Dorsolateral prefrontal cortex (tissue), 120 donors: ENCODE measurements at regions of chr2 and their contacts with region 1.

Region 1: GRCh38 chr2:234288974-234289455 is 207.9 kb downstream of the ARL4C start:
- DNase-seq: peak in 9 of 10 donors; percentile 23 to 66 (median 48)
- H3K4me3 ChIP-seq: no peak overlapping the region
- H3K27ac ChIP-seq: no peak overlapping the region
- H3K27me3 ChIP-seq: peaks cover 0 to 5% (median 0%) of the 10 kb centered on the region in 45 donors
- CTCF ChIP-seq: peak; percentile 45 to 77 (median 70)

Region 2: DNA sequence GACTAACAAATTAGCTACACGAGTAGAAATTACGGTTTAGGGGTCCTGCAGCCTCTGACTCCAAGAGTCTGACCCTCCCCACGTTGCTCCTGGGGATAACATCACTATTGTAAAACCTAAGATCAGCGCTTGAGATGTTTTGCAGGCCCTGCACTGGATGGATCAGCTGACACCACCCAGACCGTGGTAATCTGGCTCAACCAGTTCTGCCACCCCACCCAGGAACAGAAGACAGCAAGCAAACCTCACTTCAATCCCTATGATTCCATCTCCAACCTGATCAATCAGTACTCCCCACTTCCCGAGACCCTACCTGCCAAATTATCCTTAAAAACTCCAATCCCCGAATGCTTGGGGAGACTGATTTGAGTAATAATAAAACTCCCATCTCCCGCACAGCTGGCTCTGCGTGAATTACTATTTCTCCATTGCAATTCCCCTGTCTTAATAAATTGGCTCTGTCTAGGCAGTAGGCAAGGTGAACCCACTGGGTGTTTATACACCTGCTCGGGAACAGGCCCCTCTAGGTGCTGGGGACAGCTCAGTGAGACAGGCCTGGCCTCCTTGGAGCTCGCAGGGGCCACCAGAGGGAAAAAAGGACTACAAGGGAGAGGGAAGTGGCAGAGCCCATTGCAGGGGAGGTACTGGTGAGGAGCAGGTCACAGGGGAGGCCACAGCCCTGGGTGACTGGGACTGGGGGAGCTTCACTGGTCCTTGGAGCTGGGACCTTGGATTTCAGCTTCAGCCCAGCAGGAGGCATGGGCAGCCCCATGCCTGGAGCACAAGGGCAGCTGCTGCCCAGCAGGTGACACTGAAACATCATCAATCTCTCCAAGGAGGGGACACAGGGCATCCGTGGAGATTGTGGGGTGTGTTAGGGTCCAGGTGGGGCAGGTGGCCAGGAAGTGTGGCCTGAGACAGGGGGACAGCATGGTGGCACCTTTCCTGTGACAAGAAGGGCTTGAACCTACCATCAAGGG is 1307.3 kb before region 1 on chr2:
- intact Hi-C with region 1: no loop called
- DNase-seq: no peak
- H3K4me3 ChIP-seq: no peak overlapping the region
- H3K27ac ChIP-seq: no peak overlapping the region
- H3K27me3 ChIP-seq: peaks cover 0 to 3% (median 0%) of the 10 kb centered on the region in 45 donors
- CTCF ChIP-seq: no peak

Region 3: GRCh38 chr2:234060236-234060635 is 228.8 kb before region 1 on chr2:
- intact Hi-C with region 1: no loop called
- DNase-seq: no peak
- H3K4me3 ChIP-seq: no peak overlapping the region
- H3K27ac ChIP-seq: no peak overlapping the region
- H3K27me3 ChIP-seq: peaks cover 0 to 7% (median 0%) of the 10 kb centered on the region in 45 donors
- CTCF ChIP-seq: no peak

Region 4: GRCh38 chr2:234324116-234324515 is 35.1 kb after region 1 on chr2:
- intact Hi-C with region 1: no loop called
- DNase-seq: peak in 4 of 10 donors; percentile 11 to 51 (median 36)
- H3K4me3 ChIP-seq: peak overlapping the region in 2 of 59 donors; percentile 7 to 10
- H3K27ac ChIP-seq: peak overlapping the region in 14 of 59 donors; percentile 3 to 56 (median 36)
- H3K27me3 ChIP-seq: peaks cover 0 to 3% (median 0%) of the 10 kb centered on the region in 45 donors
- CTCF ChIP-seq: no peak

Region 5: GRCh38 chr2:234500394-234501006 is 211.5 kb after region 1 on chr2:
- intact Hi-C with region 1: loop called (anchors 5 to 10 kb)
- DNase-seq: peak in 6 of 10 donors; percentile 22 to 64 (median 52)
- H3K4me3 ChIP-seq: no peak overlapping the region
- H3K27ac ChIP-seq: no peak overlapping the region
- H3K27me3 ChIP-seq: peaks cover 0 to 3% (median 0%) of the 10 kb centered on the region in 45 donors
- CTCF ChIP-seq: peak in 53 of 56 donors; percentile 25 to 78 (median 60)

Region 6: DNA sequence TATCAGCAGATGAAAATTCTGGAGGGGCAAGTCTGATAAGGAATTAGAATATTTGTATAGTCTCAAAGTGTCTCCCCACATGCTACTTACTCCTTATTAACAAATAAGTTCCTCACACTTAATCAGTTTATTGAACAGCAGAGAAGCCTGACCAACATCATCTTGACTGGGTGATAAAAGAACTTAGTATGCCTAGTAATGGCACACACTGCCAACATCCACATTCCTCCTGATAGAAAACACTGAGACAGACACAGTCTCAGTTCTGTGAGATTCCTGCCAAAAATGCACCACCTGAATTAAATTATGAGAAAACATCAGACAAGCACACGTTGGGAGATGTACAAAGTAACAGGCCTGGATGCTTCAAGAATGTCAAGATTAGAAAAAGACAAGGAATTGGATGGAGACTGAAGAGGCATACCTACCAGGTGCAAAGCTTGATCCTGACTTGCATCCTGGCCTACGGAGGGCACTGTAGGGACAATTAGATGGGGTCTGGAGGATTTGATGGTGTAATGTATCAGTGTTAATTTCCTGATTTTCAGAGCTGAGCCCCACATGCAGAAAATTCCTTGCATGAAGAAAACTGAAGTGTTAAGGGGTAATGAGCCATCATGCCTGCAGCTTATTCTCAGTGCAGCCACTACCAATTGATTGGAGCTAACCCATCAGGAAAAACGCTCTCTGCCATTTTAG is 462.4 kb after region 1 on chr2:
- intact Hi-C with region 1: no loop called
- DNase-seq: no peak
- H3K4me3 ChIP-seq: no peak overlapping the region
- H3K27ac ChIP-seq: no peak overlapping the region
- H3K27me3 ChIP-seq: no peaks in the 10 kb centered on the region
- CTCF ChIP-seq: no peak